Endothelial cell of umbilical vein (primary cell): ENCODE measurements at regions of chr1 and their contacts with region 1.

Region 1: DNA sequence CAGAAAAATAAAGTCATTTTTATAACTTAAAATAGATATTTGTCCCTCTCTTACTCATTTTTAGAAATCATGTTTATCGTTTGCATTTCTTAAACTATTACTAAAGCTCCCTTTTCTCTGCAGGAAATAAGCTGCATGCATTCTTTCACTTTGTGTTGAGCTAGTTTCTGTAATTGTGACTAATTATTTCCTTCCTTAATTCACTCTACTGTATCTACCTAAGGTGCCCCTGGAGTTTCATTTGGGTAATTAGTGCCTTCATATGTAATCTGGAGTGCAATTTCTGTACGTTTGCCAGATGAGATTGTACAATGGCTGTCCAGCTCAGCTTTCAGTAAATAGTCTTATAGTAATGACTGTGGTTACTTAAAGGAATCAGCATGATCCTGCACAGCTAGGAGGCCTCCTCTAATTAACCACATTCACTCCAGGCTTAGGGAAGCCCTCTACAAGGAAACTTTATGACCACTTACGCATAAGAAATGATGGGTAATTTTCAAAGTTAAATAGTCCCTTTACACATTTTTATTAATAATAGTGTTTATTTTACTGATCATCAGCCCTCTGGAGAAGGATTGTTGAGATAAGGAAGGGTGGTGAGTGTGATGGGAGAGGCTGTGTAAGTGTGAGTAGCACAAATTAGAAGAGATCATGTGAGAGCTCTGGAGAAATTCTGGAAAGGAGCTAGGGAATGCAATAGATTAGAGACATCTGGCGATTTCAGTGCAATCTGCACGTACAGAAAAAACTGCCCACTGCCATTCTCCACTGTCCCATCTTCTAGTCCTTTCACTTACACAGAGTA is 86.8 kb downstream of the LRRC8C start:
- DNase-seq: peak; percentile 89
- H3K4me3 ChIP-seq: peak overlapping the region in 2 of 3 experiments; percentile 16 to 52
- H3K27ac ChIP-seq: peak overlapping the region; percentile 76
- H3K4me1 ChIP-seq: peaks cover 75% of the 10 kb centered on the region
- H3K27me3 ChIP-seq: no peaks in the 10 kb centered on the region
- CTCF ChIP-seq: no peak
- POLR2A ChIP-seq: no peak

Region 2: GRCh38 chr1:89657886-89658285 is 61.8 kb before region 1 on chr1:
- CTCF ChIA-PET with region 1: no interaction called
- POLR2A ChIA-PET with region 1: no interaction called
- dilution Hi-C with region 1: no loop called
- intact Hi-C with region 1: no loop called
- DNase-seq: peak; percentile 44
- H3K4me3 ChIP-seq: no peak overlapping the region
- H3K27ac ChIP-seq: no peak overlapping the region
- H3K4me1 ChIP-seq: peaks cover 14% of the 10 kb centered on the region
- H3K27me3 ChIP-seq: no peaks in the 10 kb centered on the region
- CTCF ChIP-seq: no peak
- POLR2A ChIP-seq: no peak

Region 3: DNA sequence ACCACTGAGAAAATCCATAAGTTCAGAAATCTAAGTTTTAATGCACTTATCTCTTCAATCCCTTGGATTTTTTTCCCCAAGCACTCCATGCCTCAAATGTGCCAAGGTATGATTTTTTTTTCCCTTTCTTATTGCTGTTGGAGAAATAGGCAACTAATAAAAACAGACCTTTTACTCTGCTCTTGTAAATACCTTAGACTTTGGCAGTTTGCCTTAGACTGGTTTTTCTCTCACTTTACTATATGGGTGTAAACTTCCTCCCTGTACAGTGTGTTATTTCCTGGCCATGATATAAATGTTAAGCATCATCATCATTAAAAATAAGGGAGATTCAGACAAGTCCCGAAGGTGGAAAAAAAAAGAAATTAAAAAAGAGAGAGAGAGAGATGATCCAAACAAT is 21.1 kb before region 1 on chr1:
- CTCF ChIA-PET with region 1: interaction called, 14 read pairs
- POLR2A ChIA-PET with region 1: no interaction called
- dilution Hi-C with region 1: no loop called
- intact Hi-C with region 1: no loop called
- DNase-seq: peak; percentile 85
- H3K4me3 ChIP-seq: no peak overlapping the region
- H3K27ac ChIP-seq: peak overlapping the region; percentile 54
- H3K4me1 ChIP-seq: peaks cover 60% of the 10 kb centered on the region
- H3K27me3 ChIP-seq: no peaks in the 10 kb centered on the region
- CTCF ChIP-seq: no peak
- POLR2A ChIP-seq: no peak

Region 4: DNA sequence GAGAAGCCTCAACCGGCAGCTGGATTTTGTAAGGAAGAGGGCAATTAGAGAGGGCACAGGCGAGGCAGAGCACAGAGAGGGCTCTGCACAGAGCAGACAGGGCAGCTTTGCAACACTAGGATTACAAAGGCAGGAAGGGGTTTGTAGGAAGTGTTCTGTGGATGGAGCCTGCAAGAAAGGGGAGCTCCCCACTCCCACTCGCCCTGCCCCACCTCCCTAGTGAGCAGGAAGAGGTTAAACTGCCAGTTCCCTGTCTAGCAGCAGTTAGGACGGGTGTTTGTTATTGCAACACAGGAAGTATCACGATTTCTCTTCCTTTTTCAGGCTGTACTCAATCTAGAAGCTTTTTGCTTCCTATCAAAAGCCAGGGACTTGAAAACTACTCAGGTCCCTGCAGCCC is 37.8 kb after region 1 on chr1:
- CTCF ChIA-PET with region 1: interaction called, 40 read pairs
- POLR2A ChIA-PET with region 1: no interaction called
- dilution Hi-C with region 1: no loop called
- intact Hi-C with region 1: loop called (anchors 1 kb)
- DNase-seq: peak; percentile 85
- H3K4me3 ChIP-seq: peak overlapping the region in 1 of 3 experiments; percentile 23
- H3K27ac ChIP-seq: peak overlapping the region; percentile 49
- H3K4me1 ChIP-seq: peaks cover 51% of the 10 kb centered on the region
- H3K27me3 ChIP-seq: no peaks in the 10 kb centered on the region
- CTCF ChIP-seq: no peak
- POLR2A ChIP-seq: no peak

Region 5: GRCh38 chr1:89873770-89874169 is 154.1 kb after region 1 on chr1:
- CTCF ChIA-PET with region 1: no interaction called
- POLR2A ChIA-PET with region 1: no interaction called
- dilution Hi-C with region 1: no loop called
- intact Hi-C with region 1: no loop called
- DNase-seq: peak; percentile 76
- H3K4me3 ChIP-seq: no peak overlapping the region
- H3K27ac ChIP-seq: no peak overlapping the region
- H3K4me1 ChIP-seq: peaks cover 6% of the 10 kb centered on the region
- H3K27me3 ChIP-seq: no peaks in the 10 kb centered on the region
- CTCF ChIP-seq: no peak
- POLR2A ChIP-seq: no peak